H1 (cell line): ENCODE measurements at regions of chr17 and their contacts with region 1.

Region 1: GRCh38 chr17:28951991-28952975 is 965 bp upstream of the PHF12 start:
- DNase-seq: peak; percentile 89 to 96
- H3K4me3 ChIP-seq: peak overlapping the region; percentile 68 to 97 (median 84)
- H3K27ac ChIP-seq: peak overlapping the region; percentile 92
- H3K4me1 ChIP-seq: peaks cover 9 to 28% (median 14%) of the 10 kb centered on the region in 4 experiments; a peak in 5 of 7 replicates
- H3K27me3 ChIP-seq: no peaks in the 10 kb centered on the region
- CTCF ChIP-seq: no peak
- EP300 ChIP-seq: no peak
- POLR2A ChIP-seq: peak; percentile 49 to 60; a peak in 2 of 3 replicates
- RAD21 ChIP-seq: no peak

Region 2: GRCh38 chr17:28710861-28711722 is 241.2 kb before region 1 on chr17:
- CTCF ChIA-PET with region 1: no interaction called
- POLR2A ChIA-PET with region 1: interaction called, 14 read pairs
- DNase-seq: peak; percentile 83 to 96
- H3K4me3 ChIP-seq: peak overlapping the region; percentile 59 to 85 (median 82)
- H3K27ac ChIP-seq: peak overlapping the region; percentile 98
- H3K4me1 ChIP-seq: peaks cover 5 to 17% (median 9%) of the 10 kb centered on the region in 4 experiments; a peak in 6 of 7 replicates
- H3K27me3 ChIP-seq: no peaks in the 10 kb centered on the region
- CTCF ChIP-seq: no peak
- EP300 ChIP-seq: no peak
- POLR2A ChIP-seq: peak; percentile 96 to 99
- RAD21 ChIP-seq: no peak

Region 3: GRCh38 chr17:28896884-28897768 is 55.2 kb before region 1 on chr17 and contains the start of gene FLOT2:
- CTCF ChIA-PET with region 1: interaction called, 8 read pairs
- POLR2A ChIA-PET with region 1: interaction called, 22 read pairs
- DNase-seq: peak; percentile 38 to 83
- H3K4me3 ChIP-seq: peak within 1 kb of the TSS; percentile 79 to 94 (median 89)
- H3K27ac ChIP-seq: peak within 1 kb of the TSS; percentile 68; the same call in 1 of the 2 replicates
- H3K4me1 ChIP-seq: peaks cover 2 to 18% (median 8%) of the 10 kb centered on the region in 4 experiments
- H3K27me3 ChIP-seq: no peaks in the 10 kb centered on the region
- CTCF ChIP-seq: peak in 2 of 3 experiments; percentile 14 to 33; a peak in 3 of 4 replicates
- EP300 ChIP-seq: no peak; a peak in 1 of 3 replicates
- POLR2A ChIP-seq: peak; percentile 56 to 75; a peak in 2 of 3 replicates
- RAD21 ChIP-seq: no peak
- total RNA-seq, gene FLOT2: 116 and 121 TPM in 2 replicates

Region 4: GRCh38 chr17:28916302-28916934 is 35.9 kb before region 1 on chr17:
- CTCF ChIA-PET with region 1: interaction called, 7 read pairs
- POLR2A ChIA-PET with region 1: interaction called, 16 read pairs
- DNase-seq: no peak
- H3K4me3 ChIP-seq: no peak overlapping the region
- H3K27ac ChIP-seq: no peak overlapping the region
- H3K4me1 ChIP-seq: no peaks in the 10 kb centered on the region; a peak in 2 of 7 replicates
- H3K27me3 ChIP-seq: no peaks in the 10 kb centered on the region
- CTCF ChIP-seq: peak; percentile 30 to 61 (median 47)
- EP300 ChIP-seq: no peak
- POLR2A ChIP-seq: no peak
- RAD21 ChIP-seq: peak; percentile 33 to 51; a peak in 3 of 4 replicates

Region 5: GRCh38 chr17:29116804-29117772 is 164.8 kb after region 1 on chr17:
- CTCF ChIA-PET with region 1: interaction called, 548 read pairs
- POLR2A ChIA-PET with region 1: interaction called, 4 read pairs
- DNase-seq: peak; percentile 57 to 97
- H3K4me3 ChIP-seq: no peak overlapping the region
- H3K27ac ChIP-seq: no peak overlapping the region
- H3K4me1 ChIP-seq: peaks cover 0 to 11% (median 8%) of the 10 kb centered on the region in 4 experiments; a peak in 6 of 7 replicates
- H3K27me3 ChIP-seq: no peaks in the 10 kb centered on the region
- CTCF ChIP-seq: peak; percentile 97 to 99 (median 99)
- EP300 ChIP-seq: no peak
- POLR2A ChIP-seq: no peak
- RAD21 ChIP-seq: peak; percentile 92 to 94